Activated naive CD4-positive, alpha-beta T cell treated with anti-CD3 and anti-CD28 coated beads for 36 hours (primary cell): ENCODE measurements at regions of chr1 and their contacts with region 1.

Region 1: DNA sequence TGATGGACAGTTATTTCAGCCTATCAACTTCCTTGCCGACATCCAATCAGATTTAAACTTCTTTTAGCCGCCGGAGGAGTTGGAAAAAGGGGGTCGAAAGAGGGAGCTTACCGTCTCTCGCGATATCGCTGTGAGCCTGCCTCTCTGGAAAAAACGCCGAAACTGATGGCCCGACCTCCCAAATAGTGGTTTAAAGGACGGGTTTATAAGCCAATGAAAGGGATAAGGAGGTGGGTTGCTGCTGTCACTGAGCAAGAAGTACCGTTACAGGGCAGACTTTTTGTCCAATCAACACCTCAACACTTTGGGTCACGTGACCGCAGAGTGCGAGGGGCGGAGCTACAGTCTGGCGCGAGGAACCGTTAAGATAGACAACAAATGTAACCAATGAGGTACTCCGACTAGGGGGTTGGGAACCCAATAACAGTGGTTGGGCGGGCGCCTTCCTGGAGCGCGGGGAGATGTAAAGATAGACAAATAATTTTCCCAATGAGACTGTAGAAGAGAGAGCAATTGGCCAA is at the start of gene RBM15:
- DNase-seq: peak; percentile 99
- H3K4me3 Mint-ChIP-seq: no peak within 1 kb of the TSS
- H3K27ac Mint-ChIP-seq: no peak within 1 kb of the TSS
- H3K4me1 Mint-ChIP-seq: peaks cover 48% of the 10 kb centered on the region
- H3K27me3 Mint-ChIP-seq: no peaks in the 10 kb centered on the region
- total RNA-seq, gene RBM15: 91.0 to 91.5 TPM

Region 2: DNA sequence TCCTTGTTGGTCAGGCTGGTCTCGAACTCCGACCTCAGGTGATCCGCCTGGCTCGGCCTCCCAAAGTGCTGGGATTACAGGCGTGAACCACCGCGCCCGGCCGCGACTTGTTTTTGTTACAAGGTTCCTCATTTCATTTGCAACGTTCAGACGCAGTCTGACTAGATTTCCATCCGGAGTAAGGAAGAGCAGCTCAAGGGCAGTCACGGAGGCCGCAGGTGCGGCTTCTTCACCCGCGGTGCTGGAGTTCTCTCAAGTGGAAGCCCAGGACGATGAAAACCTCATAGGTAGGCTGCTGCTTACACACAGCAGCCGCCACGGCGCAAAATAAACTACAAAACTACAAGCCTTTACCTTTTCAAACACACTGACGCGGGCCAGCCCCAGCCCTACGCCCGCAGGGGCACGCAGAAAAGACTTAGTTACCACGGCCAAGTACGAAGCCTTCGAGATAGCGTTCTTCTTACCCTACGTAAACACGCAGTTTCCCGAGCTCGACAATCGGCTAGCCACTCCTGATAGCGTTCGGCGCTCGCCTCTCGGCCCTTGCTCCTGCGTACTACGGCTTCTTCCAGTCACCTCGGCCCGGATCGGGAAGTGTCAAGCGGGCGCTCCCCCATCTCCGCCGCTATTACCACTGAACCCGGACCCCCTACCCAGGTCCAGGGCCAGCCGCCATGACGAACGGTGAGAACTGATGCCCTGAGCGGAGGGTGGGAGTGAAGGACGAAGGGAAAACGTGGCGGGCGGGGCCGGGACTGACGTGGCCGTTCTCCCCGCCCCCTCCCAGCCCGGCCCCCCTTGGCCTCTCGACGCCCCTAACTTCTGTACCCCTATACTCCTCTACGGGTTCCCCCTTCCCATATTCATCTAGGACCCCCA is 1248.5 kb before region 1 on chr1 and contains the start of gene TMEM167B:
- CTCF ChIA-PET with region 1: no interaction called
- intact Hi-C with region 1: loop called (anchors 2 kb)
- DNase-seq: peak; percentile 95
- H3K4me3 Mint-ChIP-seq: peak within 1 kb of the TSS; percentile 82
- H3K27ac Mint-ChIP-seq: peak within 1 kb of the TSS; percentile 87
- H3K4me1 Mint-ChIP-seq: peaks cover 29% of the 10 kb centered on the region
- H3K27me3 Mint-ChIP-seq: no peaks in the 10 kb centered on the region
- total RNA-seq, gene TMEM167B: 35.0 to 37.6 TPM

Region 3: DNA sequence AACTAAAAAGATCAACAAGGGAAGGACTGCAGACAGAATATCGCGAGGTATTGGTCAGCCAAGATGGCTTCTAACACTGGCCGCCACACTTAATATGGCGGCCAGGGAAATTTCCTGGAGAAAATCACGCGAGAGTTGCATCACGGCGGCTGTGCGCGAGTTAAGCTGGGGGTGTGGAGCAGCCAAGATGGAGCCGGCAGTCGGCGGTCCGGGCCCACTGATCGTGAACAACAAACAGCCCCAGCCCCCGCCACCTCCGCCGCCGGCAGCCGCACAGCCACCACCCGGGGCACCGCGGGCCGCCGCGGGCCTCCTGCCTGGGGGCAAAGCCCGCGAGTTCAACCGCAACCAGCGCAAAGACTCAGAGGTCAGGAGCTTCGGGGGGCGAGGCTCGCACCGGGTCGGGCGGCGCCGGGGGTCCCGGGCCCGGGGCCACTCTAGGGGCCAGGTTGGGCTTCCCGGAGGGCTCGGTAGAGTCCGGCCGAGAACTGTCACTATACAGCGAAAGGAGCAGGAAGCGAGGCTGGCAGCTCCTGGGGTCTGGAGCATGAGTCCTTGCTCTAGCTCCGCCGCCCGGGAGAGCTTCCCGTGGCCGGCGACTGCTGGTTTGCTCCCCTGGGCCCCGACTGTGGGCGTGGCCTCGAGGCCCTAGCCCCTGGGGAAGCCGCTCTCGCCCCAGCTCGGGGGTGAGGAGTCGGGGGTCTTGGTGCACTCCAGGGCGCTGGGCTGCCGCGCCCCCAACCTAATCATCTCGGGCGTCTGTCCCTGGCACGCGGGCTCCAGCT is 304.3 kb before region 1 on chr1 and contains the start of gene STRIP1:
- CTCF ChIA-PET with region 1: no interaction called
- intact Hi-C with region 1: loop called (anchors 1 kb)
- DNase-seq: peak; percentile 96
- H3K4me3 Mint-ChIP-seq: peak within 1 kb of the TSS; percentile 91
- H3K27ac Mint-ChIP-seq: peak within 1 kb of the TSS; percentile 79
- H3K4me1 Mint-ChIP-seq: peaks cover 51% of the 10 kb centered on the region
- H3K27me3 Mint-ChIP-seq: no peaks in the 10 kb centered on the region
- total RNA-seq, gene STRIP1: 20.7 to 22.8 TPM

Region 4: DNA sequence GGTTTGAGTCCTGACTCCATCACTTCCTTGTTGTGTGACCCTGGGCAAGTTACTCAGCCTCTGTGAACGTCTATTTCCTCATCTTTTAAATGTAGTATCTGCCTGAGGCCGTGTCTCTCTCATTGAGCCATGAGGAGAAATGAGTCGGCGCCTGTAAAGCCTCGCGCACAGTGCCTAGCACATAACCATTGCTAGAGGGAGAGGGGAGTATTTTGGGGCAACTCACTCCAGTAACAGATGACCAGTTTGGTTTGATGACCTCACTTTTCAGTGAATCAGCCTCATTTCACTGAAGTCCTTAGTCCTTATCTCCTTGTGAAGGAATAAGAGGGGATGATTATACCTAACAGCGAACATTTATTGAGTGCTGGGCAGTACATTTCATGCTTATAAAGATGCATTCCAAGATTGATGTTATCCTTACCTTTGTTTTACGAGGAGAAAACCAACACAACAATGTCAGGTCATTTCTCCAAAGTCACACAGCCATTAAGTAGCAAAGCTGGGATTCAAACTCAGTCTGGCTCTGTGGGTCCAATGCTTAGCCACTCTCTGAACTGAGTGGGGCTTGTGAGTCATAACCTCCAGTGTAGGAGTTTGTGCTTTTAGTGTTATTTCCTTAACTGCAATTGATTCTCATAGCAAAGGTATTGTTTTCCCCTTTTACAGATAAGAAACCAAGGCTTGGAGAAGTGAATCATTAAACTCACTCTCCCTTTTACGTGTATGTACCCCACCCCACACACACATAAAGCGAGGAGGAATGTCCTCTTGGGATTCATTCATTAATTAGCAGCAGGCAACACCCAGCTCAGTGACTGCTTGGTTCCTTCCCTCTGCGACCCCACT is 102.9 kb before region 1 on chr1:
- CTCF ChIA-PET with region 1: interaction called, 3 read pairs
- intact Hi-C with region 1: loop called (anchors 1 kb)
- DNase-seq: peak; percentile 84
- H3K4me3 Mint-ChIP-seq: no peak overlapping the region
- H3K27ac Mint-ChIP-seq: peak overlapping the region; percentile 89
- H3K4me1 Mint-ChIP-seq: peaks cover 55% of the 10 kb centered on the region
- H3K27me3 Mint-ChIP-seq: no peaks in the 10 kb centered on the region

Region 5: DNA sequence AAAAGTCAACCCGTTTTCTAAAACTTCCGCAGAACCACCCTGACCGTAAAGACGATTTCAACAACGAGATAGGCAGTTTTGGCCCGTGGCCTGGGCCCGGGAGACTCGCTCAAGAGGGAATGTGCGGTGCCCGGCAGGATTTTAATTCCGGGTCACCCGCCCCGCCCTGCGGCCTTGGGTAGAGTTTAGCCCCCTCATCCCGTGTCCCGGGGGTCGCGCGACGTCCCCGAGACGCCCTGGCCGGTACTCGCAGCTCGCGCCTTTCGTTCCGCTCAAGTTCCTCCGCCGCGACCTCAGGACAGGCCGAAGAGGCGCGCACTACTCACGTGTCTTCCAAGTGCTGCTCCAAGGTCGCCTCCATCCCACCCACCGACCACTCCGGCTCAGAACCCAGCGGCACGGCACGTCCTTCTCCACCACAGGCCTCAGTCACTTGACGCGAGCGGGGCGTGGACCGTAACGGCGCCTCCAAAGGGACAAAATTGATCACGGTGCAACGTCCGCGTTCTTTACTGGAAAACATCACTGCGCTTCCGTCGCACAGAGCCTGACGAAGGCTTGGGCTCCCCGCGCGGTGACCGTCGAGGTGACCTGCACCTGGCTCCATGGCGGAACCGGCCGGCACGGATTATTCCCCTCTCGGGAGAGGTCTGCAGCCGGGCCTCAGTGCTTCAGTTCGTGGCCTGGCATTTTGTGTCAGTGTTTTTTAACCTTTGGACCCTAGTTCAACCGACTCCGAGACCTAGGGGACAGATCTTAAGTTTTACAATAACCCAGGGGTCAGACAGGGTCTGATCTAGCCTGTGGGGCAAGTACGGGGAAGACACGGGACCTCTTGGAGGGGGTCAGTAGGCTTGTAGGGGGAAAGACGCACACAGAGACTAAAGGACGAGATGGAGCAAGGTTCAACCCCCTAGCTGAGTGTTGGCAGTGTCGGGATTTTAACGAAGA is 68.6 kb after region 1 on chr1 and contains the start of gene LAMTOR5:
- CTCF ChIA-PET with region 1: interaction called, 3 read pairs
- intact Hi-C with region 1: loop called (anchors 1 kb)
- DNase-seq: peak; percentile 96
- H3K4me3 Mint-ChIP-seq: peak within 1 kb of the TSS; percentile 99
- H3K27ac Mint-ChIP-seq: peak within 1 kb of the TSS; percentile 96
- H3K4me1 Mint-ChIP-seq: peaks cover 15% of the 10 kb centered on the region
- H3K27me3 Mint-ChIP-seq: no peaks in the 10 kb centered on the region
- total RNA-seq, gene LAMTOR5: 138 to 144 TPM

Region 6: DNA sequence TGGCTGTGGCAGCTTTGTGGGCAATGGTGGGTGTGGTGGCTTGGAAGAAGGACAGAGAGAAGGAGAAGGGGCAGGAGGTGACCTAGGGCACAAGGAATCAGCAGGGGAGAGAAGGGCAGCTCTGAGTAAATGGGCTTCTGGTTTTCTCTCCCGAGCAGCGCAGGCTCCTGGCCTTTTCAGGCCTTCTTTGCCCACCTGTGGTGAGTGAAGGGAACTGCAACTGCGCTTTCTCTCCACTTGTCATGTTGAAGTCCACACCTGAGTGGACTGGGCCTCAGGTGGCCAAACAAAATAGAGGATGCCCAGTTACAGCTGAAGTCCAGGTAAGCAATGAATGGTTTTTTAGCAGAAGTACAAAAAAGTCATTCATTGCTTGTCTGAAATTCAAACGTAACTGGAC is 209.4 kb after region 1 on chr1:
- CTCF ChIA-PET with region 1: no interaction called
- intact Hi-C with region 1: no loop called
- DNase-seq: no peak
- H3K4me3 Mint-ChIP-seq: no peak overlapping the region
- H3K27ac Mint-ChIP-seq: no peak overlapping the region
- H3K4me1 Mint-ChIP-seq: no peaks in the 10 kb centered on the region
- H3K27me3 Mint-ChIP-seq: peaks cover 10% of the 10 kb centered on the region

Region 7: DNA sequence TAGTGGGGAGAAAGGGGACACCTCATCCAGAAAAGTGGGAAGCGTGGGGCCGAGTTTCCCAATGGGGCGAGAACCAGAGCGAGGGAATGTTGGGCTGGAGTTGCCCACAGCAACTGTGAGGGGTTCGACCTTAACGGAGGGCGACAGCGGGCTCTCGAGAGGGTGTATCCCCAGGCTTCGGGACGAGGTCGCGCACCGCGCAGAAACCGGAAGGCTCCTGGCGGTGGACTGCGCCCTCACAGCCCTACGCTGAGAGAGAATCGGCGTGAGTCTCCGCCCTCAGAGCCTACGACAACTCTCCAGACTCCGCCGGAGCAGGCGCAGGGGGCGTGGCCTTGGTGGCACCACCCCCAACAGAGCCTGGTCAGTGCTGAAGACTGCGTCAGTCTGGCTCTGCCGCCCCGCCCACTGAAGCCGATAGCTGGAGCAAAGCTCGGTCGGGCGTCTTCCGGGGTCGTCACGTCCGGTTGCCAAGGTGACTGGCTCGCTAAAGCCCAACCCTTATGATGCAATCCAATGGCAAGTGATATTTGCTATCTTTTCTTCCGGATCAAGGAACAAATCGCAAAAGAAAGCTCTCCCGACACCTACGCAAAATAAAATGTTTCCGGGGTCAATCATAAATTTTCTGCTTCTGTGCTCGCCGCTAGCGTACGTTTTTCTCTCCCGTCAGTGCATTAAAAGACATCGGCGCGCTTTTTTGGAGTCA is 624.9 kb after region 1 on chr1 and contains the start of gene LRIF1:
- CTCF ChIA-PET with region 1: no interaction called
- intact Hi-C with region 1: loop called (anchors 1 kb)
- DNase-seq: peak; percentile 100
- H3K4me3 Mint-ChIP-seq: peak within 1 kb of the TSS; percentile 83
- H3K27ac Mint-ChIP-seq: peak within 1 kb of the TSS; percentile 96
- H3K4me1 Mint-ChIP-seq: peaks cover 34% of the 10 kb centered on the region
- H3K27me3 Mint-ChIP-seq: peaks cover 8% of the 10 kb centered on the region
- total RNA-seq, gene LRIF1: 12.0 to 12.3 TPM